ENCODE measurements at regions of chr7 and their contacts with region 1.

Region 1: GRCh38 chr7:12993025-12993424 is 305.6 kb downstream of the ARL4A start:
- DNase-seq: no peak
- H3K4me3 ChIP-seq: no peak overlapping the region
- H3K27ac ChIP-seq: no peak overlapping the region
- H3K4me1 ChIP-seq: no peaks in the 10 kb centered on the region
- CTCF ChIP-seq: no peak

Region 2: DNA sequence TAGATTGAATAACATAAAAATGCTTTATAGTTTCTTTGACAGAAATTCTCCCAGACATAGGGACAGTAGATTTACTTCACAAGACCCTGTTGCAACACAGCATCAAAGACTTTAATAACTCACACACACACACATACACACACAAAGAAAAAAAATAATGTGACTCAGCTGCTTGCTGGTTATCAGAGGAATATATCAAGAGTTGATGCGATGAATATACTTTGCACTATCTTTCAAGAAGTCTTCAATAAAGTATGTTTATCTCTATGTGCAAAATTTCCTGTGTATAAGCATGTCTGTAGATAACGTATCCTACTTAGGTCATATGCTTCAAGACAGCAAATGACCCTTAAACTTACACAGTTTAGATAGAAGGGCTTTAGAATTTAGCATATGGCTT is 62.5 kb before region 1 on chr7:
- CTCF ChIA-PET with region 1: no interaction called
- POLR2A ChIA-PET with region 1: no interaction called
- intact Hi-C with region 1: no loop called
- DNase-seq: no peak
- H3K4me3 ChIP-seq: no peak overlapping the region
- H3K27ac ChIP-seq: no peak overlapping the region
- H3K4me1 ChIP-seq: no peaks in the 10 kb centered on the region
- CTCF ChIP-seq: no peak

Region 3: DNA sequence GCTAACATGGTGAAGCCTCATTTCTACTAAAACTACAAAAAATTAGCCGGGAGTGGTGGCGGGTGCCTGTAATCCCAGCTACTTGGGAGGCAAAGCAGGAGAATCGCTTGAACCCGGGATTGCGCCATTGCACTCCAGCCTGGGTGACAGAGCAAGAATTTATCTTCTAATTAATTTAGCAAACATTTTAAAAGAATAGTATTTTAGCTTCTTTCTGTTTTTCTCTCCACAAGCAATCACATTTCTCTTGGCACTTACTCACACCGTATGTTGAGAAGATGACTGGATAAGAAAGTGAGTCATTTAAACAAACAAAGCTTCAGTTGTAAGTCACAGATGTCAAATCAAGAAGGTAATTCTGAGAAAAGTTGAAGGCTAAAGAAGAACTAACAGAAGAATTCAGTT is 41.6 kb before region 1 on chr7:
- CTCF ChIA-PET with region 1: no interaction called
- POLR2A ChIA-PET with region 1: no interaction called
- intact Hi-C with region 1: loop called (anchors 1 kb)
- DNase-seq: no peak
- H3K4me3 ChIP-seq: no peak overlapping the region
- H3K27ac ChIP-seq: no peak overlapping the region
- H3K4me1 ChIP-seq: no peaks in the 10 kb centered on the region
- CTCF ChIP-seq: no peak

Measured in OCI-LY7 (cell line).